Tibial artery (tissue), 4 donors: ENCODE measurements at regions of chr3 and their contacts with region 1.

Region 1: DNA sequence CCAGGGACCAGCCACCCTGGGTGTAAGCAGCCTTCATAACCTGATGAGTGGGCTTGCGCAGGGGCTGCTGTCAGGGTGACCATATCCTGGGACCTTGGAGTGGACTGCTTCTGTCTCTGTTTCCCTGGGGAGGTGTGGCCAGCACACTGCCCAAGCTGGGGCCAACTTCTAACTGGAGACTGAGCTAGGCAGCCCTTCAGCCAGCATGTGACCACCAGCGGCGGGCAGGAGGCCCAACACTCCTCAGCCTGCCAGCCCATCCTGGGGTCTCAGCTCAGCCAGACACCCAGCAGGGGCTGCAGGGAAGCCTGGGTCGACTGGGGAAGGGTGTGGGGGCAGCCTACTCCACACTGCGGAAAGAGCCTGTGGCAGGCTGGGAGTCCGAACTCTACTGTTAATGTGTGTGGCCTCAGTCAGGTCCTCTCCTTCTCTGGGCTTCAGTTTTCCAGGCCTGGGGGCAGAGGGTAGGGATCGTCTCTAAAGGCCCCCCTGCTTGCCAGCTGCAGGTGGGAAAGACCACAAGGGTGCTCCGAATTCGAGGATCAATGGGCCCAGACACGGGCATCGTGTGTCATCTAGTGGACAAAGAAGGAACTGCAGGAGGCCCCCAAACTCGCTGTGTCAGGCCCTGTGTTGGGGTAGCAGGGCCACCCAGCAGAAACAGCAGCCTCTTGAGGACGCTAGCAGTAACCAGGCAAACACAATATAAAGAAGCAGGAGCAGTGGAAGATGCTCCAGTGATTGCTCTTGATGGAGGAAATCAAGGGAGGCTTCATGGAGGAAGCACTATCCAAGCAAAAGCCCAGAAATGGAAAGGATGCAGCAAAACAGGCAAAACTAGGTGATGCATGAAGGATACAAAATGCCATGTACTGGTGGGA is 2.0 kb upstream of the SEMA3G start:
- DNase-seq: peak in 1 of 2 donors; percentile 72
- H3K4me3 ChIP-seq: no peak overlapping the region
- H3K27ac ChIP-seq: no peak overlapping the region
- H3K4me1 ChIP-seq: peaks cover 0 to 15% (median 6%) of the 10 kb centered on the region in 4 donors
- H3K27me3 ChIP-seq: no peaks in the 10 kb centered on the region
- CTCF ChIP-seq: peak; percentile 97 to 100

Region 2: DNA sequence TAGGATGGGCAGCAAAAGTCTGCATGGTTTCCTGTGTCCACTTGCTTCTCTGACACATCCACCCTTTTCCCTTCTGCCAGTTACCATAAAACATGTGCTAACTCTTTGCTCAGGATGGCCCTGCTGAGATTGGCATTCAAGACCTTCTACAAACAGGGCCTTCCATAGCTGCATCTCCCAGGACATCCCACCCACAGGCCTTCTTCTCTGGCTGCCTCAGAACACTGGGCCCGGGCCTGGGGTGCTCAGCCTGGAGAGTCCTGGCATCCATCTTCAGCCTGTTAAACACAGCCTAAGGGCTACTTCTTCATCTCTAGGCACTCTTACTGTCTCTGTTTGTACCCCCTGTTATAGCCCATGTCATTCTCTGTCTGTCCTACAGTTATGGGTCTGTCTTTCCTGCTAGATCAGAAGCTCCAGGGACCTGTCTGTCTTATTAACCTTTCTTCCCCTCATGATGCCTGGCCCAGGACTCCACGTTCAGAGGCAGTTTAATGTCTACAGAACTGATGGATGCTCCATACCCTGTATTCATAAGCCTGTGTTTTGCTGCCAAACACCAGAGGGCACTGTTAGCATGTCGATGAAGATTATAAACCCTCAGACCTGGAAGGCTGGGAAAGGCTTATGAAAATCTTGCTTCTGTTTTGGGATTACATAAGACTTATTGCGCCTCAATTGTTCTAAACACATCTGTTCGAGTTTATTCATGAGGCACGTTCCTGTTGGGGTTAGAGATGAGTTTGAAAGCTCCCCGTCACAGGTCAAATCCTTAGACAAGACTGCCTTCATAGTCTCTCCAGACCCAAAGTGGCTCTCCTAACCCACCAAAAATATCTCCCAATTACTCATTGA is 18.5 kb before region 1 on chr3:
- intact Hi-C with region 1: loop called (anchors 2 kb)
- DNase-seq: peak; percentile 67 to 74
- H3K4me3 ChIP-seq: no peak overlapping the region
- H3K27ac ChIP-seq: no peak overlapping the region
- H3K4me1 ChIP-seq: peaks cover 0 to 10% (median 0%) of the 10 kb centered on the region in 4 donors
- H3K27me3 ChIP-seq: no peaks in the 10 kb centered on the region
- CTCF ChIP-seq: peak; percentile 55 to 63